CD8-positive, alpha-beta T cell (primary cell): ENCODE measurements at regions of chr7 and their contacts with region 1.

Region 1: DNA sequence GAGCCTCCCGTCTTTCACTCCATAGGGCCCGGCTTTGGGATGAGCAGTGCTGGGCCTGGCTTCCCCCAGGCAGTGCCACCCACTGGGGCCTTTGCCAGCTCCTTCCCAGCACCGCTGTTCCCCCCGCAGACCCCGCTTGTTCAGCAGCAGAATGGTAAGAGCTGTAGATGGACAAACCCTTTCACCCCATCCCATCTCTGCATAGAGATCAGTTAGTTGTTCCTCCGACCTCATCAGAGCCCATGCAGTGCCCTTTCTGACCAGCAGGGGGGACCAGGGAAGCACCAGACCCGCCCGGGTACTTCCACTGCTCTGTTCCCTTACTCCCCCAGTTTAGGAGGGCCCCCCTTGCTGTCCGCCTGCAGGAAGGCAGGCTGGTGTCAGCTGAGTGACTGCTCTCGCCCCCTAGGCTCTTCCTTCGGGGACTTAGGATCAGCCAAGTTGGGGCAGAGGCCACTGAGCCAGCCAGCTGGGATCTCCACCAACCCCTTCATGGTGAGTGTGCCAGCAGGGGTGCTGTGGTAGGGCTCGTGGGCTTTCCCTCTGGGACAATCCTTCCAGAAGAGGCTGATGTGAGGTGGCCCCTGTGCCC is 9.8 kb downstream of the SAP25 start:
- DNase-seq: peak; percentile 76 to 93 (median 82)
- ATAC-seq: peak; percentile 83
- H3K4me3 ChIP-seq: no peak overlapping the region
- H3K4me3 Mint-ChIP-seq: no peak overlapping the region
- H3K27ac ChIP-seq: no peak overlapping the region
- H3K27ac Mint-ChIP-seq: no peak overlapping the region
- H3K4me1 ChIP-seq: peaks cover 31% of the 10 kb centered on the region
- H3K4me1 Mint-ChIP-seq: peaks cover 30% of the 10 kb centered on the region
- H3K27me3 ChIP-seq: no peaks in the 10 kb centered on the region
- H3K27me3 Mint-ChIP-seq: no peaks in the 10 kb centered on the region
- CTCF ChIP-seq: peak; percentile 85

Region 2: DNA sequence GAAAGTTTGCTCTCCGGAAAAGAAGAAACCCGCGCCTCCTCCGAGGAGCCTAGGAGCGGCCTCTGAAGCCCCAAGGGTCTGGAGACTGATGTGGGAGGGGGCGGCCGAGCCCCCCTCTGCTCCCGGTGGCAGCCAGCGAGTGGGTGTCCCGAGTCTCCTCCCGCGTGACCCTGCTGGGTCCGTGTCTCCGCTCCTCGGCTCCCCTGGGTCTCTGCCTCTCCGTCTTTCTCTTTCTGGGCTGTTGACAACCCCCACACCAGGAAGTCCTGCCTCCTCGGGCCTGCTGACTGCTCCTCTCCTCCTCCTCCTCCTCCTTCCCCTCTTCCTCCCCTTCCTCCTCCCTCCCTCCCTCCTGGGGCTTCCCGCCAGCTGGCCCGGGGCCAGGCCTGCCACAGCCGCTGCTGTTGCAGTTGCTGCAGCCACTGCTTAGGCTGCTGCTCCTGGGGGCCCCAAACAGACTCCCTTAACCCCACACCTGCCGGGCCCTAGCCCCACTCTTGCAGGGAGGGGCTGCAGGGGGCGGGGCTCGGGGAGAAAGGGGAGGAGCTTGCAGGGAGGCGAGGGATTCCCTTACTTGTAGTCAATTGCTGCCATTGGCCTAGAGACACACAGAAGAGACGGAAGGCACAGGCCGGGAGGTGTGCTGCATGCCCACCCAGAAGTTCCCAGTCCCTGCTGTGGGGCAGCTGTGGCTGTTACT is 84.8 kb before region 1 on chr7 and contains the start of gene TSC22D4:
- CTCF ChIA-PET with region 1: interaction called, 203 read pairs
- POLR2A ChIA-PET with region 1: interaction called, 5 read pairs
- intact Hi-C with region 1: loop called (anchors 1 to 2 kb)
- DNase-seq: peak; percentile 85 to 97 (median 94)
- ATAC-seq: peak; percentile 69
- H3K4me3 ChIP-seq: peak within 1 kb of the TSS; percentile 82 to 96
- H3K4me3 Mint-ChIP-seq: peak within 1 kb of the TSS; percentile 93
- H3K27ac ChIP-seq: peak within 1 kb of the TSS; percentile 72 to 75
- H3K27ac Mint-ChIP-seq: peak within 1 kb of the TSS; percentile 89
- H3K4me1 ChIP-seq: peaks cover 54% of the 10 kb centered on the region
- H3K4me1 Mint-ChIP-seq: peaks cover 44% of the 10 kb centered on the region
- H3K27me3 ChIP-seq: no peaks in the 10 kb centered on the region
- H3K27me3 Mint-ChIP-seq: no peaks in the 10 kb centered on the region
- CTCF ChIP-seq: no peak
- total RNA-seq, gene TSC22D4: 30.7 to 32.3 TPM

Region 3: GRCh38 chr7:100538654-100539435 is 25.1 kb before region 1 on chr7 and contains the start of gene AGFG2:
- CTCF ChIA-PET with region 1: interaction called, 86 read pairs
- POLR2A ChIA-PET with region 1: interaction called, 9 read pairs
- intact Hi-C with region 1: loop called (anchors 1 kb)
- DNase-seq: peak; percentile 100
- ATAC-seq: peak; percentile 94
- H3K4me3 ChIP-seq: peak within 1 kb of the TSS; percentile 67 to 74
- H3K4me3 Mint-ChIP-seq: peak within 1 kb of the TSS; percentile 99
- H3K27ac ChIP-seq: peak within 1 kb of the TSS; percentile 48 to 61
- H3K27ac Mint-ChIP-seq: peak within 1 kb of the TSS; percentile 84
- H3K4me1 ChIP-seq: peaks cover 40% of the 10 kb centered on the region
- H3K4me1 Mint-ChIP-seq: peaks cover 49% of the 10 kb centered on the region
- H3K27me3 ChIP-seq: no peaks in the 10 kb centered on the region
- H3K27me3 Mint-ChIP-seq: no peaks in the 10 kb centered on the region
- CTCF ChIP-seq: no peak
- total RNA-seq, gene AGFG2: 4.4 to 6.3 TPM

Region 4: DNA sequence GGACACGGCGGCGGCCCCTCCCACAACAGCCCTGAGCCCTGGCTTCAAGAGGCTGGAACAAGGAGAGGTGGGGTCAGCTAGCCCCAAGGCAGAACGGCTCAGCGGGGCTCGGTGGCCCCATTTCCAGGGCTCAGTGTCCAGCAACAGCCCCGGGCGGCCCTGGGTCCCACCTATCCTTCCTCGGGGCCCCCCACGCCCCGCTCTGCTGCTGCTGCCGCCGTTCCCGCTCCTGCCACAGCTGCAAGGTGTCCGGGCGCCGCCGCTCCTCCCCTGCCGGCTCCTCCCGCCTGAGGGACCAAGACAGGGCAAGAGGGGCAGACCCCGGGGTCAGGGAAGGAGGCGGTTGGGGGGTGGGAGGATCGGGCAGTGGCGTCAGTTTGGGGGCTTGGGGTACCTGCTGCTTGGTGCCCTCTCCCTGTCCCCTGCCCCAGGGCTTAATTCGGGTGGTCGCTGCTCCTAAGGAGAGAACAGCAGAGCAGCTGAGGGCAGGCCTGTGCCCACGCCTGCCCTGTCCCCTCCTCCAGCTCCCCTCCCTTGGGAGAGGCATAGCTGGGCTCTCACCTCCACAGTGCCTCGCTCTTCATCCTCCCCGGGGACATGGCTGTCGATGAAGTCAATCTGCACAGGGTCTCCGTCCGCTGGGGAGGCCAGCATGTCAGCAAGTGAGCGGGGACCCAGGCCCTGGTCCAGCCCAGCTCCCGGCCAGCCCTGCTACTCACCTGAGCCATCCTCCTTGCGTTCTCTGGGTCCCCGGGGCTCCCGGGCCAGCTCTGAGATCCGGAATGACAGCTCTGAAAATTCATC is 13.4 kb after region 1 on chr7:
- CTCF ChIA-PET with region 1: interaction called, 210 read pairs
- POLR2A ChIA-PET with region 1: no interaction called
- intact Hi-C with region 1: no loop called
- DNase-seq: no peak
- ATAC-seq: no peak
- H3K4me3 ChIP-seq: no peak overlapping the region
- H3K4me3 Mint-ChIP-seq: no peak overlapping the region
- H3K27ac ChIP-seq: no peak overlapping the region
- H3K27ac Mint-ChIP-seq: no peak overlapping the region
- H3K4me1 ChIP-seq: peaks cover 29% of the 10 kb centered on the region
- H3K4me1 Mint-ChIP-seq: peaks cover 4% of the 10 kb centered on the region
- H3K27me3 ChIP-seq: no peaks in the 10 kb centered on the region
- H3K27me3 Mint-ChIP-seq: no peaks in the 10 kb centered on the region
- CTCF ChIP-seq: no peak

Region 5: GRCh38 chr7:100604028-100604975 is 40.4 kb after region 1 on chr7:
- CTCF ChIA-PET with region 1: interaction called, 6 read pairs
- POLR2A ChIA-PET with region 1: no interaction called
- intact Hi-C with region 1: loop called (anchors 1 kb)
- DNase-seq: peak; percentile 45 to 87 (median 77)
- ATAC-seq: peak; percentile 76
- H3K4me3 ChIP-seq: peak overlapping the region; percentile 62 to 79
- H3K4me3 Mint-ChIP-seq: peak overlapping the region; percentile 85
- H3K27ac ChIP-seq: peak overlapping the region; percentile 53 to 70
- H3K27ac Mint-ChIP-seq: peak overlapping the region; percentile 87
- H3K4me1 ChIP-seq: peaks cover 19% of the 10 kb centered on the region
- H3K4me1 Mint-ChIP-seq: peaks cover 22% of the 10 kb centered on the region
- H3K27me3 ChIP-seq: peaks cover 0 to 3% of the 10 kb centered on the region in 2 experiments
- H3K27me3 Mint-ChIP-seq: no peaks in the 10 kb centered on the region
- CTCF ChIP-seq: peak; percentile 50

Region 6: GRCh38 chr7:100726996-100727761 is 163.3 kb after region 1 on chr7:
- CTCF ChIA-PET with region 1: interaction called, 13 read pairs
- POLR2A ChIA-PET with region 1: no interaction called
- intact Hi-C with region 1: loop called in 1 of 2 experiments (anchors 1 kb)
- DNase-seq: no peak
- ATAC-seq: no peak
- H3K4me3 ChIP-seq: no peak overlapping the region
- H3K4me3 Mint-ChIP-seq: no peak overlapping the region
- H3K27ac ChIP-seq: no peak overlapping the region
- H3K27ac Mint-ChIP-seq: no peak overlapping the region
- H3K4me1 ChIP-seq: no peaks in the 10 kb centered on the region
- H3K4me1 Mint-ChIP-seq: peaks cover 3% of the 10 kb centered on the region
- H3K27me3 ChIP-seq: peaks cover 0 to 4% of the 10 kb centered on the region in 2 experiments
- H3K27me3 Mint-ChIP-seq: peaks cover 28% of the 10 kb centered on the region
- CTCF ChIP-seq: no peak